Activated T-helper 1 cell treated with anti-CD3 and anti-CD28 coated beads, Interleukin-12 subunit alpha, Interleukin-12 subunit beta, Interleukin-2, Interleukin-4 antibody, amounts not matched to agents 30 ng/mL and 10 ng/mL and 1 ng/mL, durations not matched to agents 14 hours and 24 hours and 36 hours (primary cell): ENCODE measurements at regions of chr14 and their contacts with region 1.

Region 1: DNA sequence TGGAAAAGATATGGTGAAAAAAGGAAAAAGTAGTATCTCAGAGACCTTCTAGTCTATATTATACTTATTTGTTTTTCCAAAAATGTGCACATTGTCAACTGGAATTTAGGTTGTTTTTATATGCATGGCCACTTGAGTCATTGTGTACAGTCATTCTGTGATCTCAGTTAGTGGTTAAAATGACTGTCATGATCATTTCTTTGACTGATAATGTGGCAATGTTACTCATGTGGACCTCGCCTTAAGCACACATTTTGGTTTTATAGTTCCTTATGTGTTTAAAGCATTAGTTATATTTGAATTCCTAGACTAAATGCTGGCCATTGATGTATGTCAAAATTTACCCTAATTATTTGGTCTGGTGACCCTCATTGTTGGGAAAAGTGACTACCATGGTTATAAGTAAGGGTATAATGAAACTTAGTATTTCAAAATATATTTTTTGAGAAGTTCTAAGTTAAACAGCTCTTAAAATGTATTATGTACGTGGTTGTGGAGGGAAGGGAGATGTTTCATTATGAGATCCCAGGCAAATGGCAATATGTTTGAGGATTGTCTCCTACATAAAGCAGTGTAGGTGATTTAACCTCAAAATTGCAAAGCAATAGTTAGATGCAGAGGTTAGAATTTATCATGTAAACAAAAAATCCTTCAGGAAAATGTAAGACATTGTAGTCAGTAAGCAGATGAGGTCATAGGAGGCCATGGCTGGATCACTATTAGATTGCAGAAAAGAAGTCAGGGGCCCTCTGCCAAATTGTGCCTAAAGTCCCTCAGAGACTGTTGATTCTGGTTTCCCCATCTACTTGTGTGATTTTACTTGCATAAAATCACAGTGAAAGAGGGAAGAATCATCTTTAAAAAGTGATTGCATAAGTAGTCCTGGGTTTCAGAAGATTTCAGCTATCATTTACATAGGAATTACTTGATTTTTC is 17.5 kb downstream of the PNMA1 start:
- DNase-seq: no peak
- H3K4me3 Mint-ChIP-seq: peak overlapping the region; percentile 64
- H3K27ac Mint-ChIP-seq: peak overlapping the region; percentile 78
- H3K4me1 Mint-ChIP-seq: peaks cover 41% of the 10 kb centered on the region
- H3K27me3 Mint-ChIP-seq: no peaks in the 10 kb centered on the region

Region 2: DNA sequence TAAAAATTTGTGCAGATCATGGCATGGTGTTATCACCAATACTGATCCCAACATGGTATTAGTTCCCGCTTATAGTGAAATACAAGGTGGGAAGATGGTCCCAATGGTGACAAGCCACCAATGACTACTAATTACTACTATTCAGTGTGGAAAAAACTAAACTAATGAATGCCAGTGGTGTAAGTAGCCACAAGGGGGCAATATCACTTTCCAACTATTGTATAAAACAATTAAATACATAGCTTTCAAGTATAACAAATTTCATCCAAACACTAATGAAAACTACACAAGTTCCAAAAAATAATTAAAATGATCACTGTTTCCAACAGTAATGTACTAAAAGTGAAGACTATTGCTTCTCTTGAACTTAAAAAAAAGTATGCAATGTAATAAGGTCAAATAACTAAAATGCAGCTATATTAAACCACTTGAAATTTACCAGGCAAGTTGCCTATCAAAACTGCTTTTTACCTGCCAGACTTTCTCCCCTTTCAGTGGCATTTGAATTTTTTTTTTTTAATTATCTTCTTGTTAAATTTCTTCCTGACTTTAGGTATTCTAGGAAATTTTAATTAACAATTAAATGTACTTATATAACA is 401.4 kb before region 1 on chr14:
- intact Hi-C with region 1: loop called (anchors 2 kb)
- DNase-seq: no peak
- H3K4me3 Mint-ChIP-seq: no peak overlapping the region
- H3K27ac Mint-ChIP-seq: no peak overlapping the region
- H3K4me1 Mint-ChIP-seq: peaks cover 33% of the 10 kb centered on the region
- H3K27me3 Mint-ChIP-seq: no peaks in the 10 kb centered on the region

Region 3: DNA sequence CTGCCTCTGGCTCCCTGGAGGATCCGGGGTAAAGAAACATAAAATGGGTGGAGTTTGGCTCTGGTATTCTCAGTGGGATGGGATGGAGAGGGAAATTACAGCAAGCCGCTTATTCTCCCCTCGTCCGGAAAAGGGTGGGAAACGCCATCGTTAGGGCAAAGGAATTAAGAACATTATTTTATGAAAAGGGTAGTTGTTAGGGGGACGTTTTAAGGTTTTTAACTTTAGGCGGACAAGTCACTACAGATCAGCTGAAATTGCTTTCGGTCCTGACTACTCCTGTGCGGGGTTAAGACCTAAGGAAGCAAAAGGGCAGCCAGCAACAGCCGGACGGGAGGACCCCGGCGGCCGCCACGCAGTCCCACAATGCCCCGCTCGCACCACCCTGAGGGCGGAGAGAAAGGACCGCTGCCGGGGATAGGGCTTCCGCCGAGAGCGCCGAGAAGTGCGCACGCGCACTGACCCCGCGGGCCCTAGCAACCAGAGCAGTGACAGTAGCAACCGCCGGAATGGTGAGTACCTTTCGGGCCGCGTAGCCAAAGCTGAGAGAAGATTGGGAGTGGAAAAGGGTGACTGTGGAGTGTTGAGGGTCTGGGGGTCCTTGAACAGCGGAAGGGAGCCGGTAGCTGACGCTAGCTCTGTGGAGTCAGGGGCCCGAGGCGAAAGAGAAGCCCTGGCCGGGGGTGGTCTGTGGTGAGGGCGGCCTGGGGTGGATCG is 52.0 kb before region 1 on chr14 and contains the start of gene DNAL1:
- intact Hi-C with region 1: loop called (anchors 5 kb)
- DNase-seq: peak; percentile 92
- H3K4me3 Mint-ChIP-seq: peak within 1 kb of the TSS; percentile 86
- H3K27ac Mint-ChIP-seq: peak within 1 kb of the TSS; percentile 71
- H3K4me1 Mint-ChIP-seq: peaks cover 15% of the 10 kb centered on the region
- H3K27me3 Mint-ChIP-seq: no peaks in the 10 kb centered on the region
- total RNA-seq, gene DNAL1: 5.3 and 8.5 TPM in 2 replicates

Region 4: DNA sequence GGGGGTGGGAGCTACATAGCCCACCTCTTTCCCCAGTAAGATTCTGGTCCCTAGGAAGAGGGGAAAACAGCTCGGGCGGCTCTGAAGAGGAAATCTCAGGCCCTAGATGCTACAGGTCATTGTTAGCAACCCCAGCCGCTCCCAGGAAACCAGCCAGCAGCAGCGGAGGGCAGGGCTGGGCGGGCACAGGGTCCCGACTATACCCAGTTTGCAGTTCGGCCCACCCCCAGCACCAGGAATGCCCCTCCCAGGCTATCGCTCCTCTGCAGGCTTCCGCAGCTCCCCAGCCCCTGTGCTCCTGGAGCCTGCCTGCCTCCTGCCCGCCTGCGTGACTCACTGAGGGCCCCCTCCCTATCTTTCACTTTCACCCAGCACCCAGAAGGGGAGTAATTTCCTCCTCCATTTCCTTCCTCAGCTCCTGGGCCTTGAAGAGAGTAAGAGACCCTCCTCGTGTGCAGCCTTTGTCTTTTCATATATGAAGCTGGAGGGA is 44.7 kb after region 1 on chr14:
- intact Hi-C with region 1: loop called (anchors 1 kb)
- DNase-seq: peak; percentile 61
- H3K4me3 Mint-ChIP-seq: peak overlapping the region; percentile 83
- H3K27ac Mint-ChIP-seq: peak overlapping the region; percentile 86
- H3K4me1 Mint-ChIP-seq: peaks cover 62% of the 10 kb centered on the region
- H3K27me3 Mint-ChIP-seq: no peaks in the 10 kb centered on the region

Region 5: DNA sequence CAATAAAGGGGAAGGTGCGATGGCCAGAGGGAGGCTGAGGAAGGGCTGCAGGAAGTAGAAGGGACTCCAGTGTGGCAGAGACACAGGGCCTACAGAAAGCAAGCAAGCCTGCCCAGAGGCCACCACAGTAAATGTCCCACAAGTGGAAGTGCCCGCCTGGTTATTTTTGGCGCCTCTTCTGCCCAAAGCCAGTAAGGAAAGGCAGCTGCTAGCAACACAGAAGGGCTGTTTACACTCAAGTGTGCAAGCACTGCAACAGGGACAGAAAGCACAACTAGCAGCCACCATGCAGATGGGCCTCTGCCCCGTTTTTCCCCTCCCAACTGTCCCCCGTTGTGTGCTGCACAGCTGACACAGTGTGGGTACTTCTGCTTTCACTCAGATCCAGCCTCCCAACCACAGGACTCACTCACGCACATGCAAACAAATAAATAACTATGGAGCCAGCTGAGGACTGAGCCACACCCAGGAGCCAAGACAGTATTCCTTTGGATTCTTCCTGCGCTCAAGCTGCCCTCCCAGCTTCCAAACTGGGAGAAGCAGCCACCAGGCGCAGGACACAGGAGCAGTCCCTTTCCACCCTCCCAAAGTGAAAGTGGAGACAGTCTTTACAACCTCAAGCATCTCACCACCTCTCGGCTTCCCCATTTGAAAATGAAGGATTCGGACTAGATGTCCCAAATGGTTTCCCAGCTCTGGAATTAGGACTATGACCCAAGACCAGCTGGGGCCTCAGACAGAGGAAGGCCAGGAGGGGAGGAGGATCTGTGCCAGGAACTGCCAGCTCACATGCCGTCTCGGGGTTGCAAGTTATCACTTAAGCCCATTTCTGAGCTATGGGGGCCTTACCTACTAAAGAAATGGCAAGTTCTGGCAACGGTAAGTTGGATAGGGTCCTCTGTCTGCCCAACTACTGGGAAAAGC is 57.5 kb after region 1 on chr14:
- intact Hi-C with region 1: loop called (anchors 2 kb)
- DNase-seq: peak; percentile 47
- H3K4me3 Mint-ChIP-seq: peak overlapping the region; percentile 90
- H3K27ac Mint-ChIP-seq: peak overlapping the region; percentile 96
- H3K4me1 Mint-ChIP-seq: peaks cover 94% of the 10 kb centered on the region
- H3K27me3 Mint-ChIP-seq: no peaks in the 10 kb centered on the region